PC-9 (cell line): ENCODE measurements at regions of chr3 and their contacts with region 1.

Region 1: DNA sequence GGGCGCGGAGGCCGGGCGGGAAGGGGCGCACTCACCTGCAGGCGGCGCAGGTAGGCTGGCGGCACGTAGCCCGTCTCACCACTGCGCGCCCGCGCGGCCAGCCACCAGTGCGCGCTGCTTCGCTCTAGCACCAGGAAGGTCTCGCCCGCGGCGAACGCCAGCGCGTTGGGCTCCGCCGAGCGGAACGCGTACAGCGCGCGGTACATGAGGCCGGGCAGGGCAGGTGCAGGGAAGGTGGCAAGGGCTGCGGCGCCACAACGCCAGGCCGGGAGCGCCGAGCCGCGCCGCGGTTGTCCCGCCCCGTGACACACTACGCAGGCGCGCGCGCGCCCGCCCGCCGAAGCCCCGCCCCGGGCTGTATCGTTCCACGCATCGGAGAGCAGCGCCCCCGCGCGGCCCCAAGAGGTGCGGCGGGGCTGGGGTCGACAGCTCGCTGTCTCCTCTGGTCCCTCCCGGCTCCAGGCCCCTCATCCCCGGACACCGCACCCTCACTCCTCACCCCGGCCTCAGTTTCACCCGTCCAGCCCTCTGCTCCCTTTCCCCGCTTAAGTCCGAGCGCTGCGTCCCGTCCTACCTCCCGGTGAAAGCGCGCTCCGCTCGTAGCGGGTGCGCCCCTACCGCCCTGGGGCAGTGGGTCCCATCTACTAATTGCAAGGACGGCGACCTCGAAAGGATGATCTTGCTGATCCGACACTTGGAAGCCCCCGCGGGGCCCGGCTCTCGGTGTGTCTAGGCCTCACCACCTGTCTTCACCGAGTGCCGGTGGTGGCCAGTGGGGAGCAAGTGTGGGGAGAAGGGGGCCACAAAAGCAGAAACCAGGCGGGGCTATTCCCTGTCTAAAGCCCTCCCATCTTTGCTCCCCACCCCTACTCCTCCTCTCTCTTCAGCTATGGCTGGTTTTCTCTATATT is at the start of gene NCKIPSD:
- DNase-seq: peak; percentile 52 to 86
- H3K4me3 ChIP-seq: peak within 1 kb of the TSS; percentile 72
- H3K27ac ChIP-seq: peak within 1 kb of the TSS; percentile 46; the same call in 1 of the 2 replicates
- H3K4me1 ChIP-seq: peaks cover 9% of the 10 kb centered on the region
- H3K27me3 ChIP-seq: no peaks in the 10 kb centered on the region
- CTCF ChIP-seq: peak; percentile 72
- total RNA-seq, gene NCKIPSD: 40.0 and 53.3 TPM in 2 replicates

Region 2: GRCh38 chr3:48765376-48765775 is 79.5 kb after region 1 on chr3:
- CTCF ChIA-PET with region 1: no interaction called
- POLR2A ChIA-PET with region 1: interaction called, 13 read pairs
- intact Hi-C with region 1: no loop called
- DNase-seq: no peak
- H3K4me3 ChIP-seq: no peak overlapping the region
- H3K27ac ChIP-seq: no peak overlapping the region
- H3K4me1 ChIP-seq: no peaks in the 10 kb centered on the region
- H3K27me3 ChIP-seq: no peaks in the 10 kb centered on the region
- CTCF ChIP-seq: peak; percentile 53

Region 3: GRCh38 chr3:48997714-48998641 is 312.1 kb after region 1 on chr3:
- CTCF ChIA-PET with region 1: no interaction called
- POLR2A ChIA-PET with region 1: no interaction called
- intact Hi-C with region 1: no loop called
- DNase-seq: no peak
- H3K4me3 ChIP-seq: no peak overlapping the region
- H3K27ac ChIP-seq: no peak overlapping the region
- H3K4me1 ChIP-seq: no peaks in the 10 kb centered on the region
- H3K27me3 ChIP-seq: no peaks in the 10 kb centered on the region
- CTCF ChIP-seq: no peak

Region 4: GRCh38 chr3:49032646-49033304 is 346.9 kb after region 1 on chr3:
- CTCF ChIA-PET with region 1: no interaction called
- POLR2A ChIA-PET with region 1: no interaction called
- intact Hi-C with region 1: no loop called
- DNase-seq: no peak
- H3K4me3 ChIP-seq: no peak overlapping the region
- H3K27ac ChIP-seq: no peak overlapping the region
- H3K4me1 ChIP-seq: peaks cover 7% of the 10 kb centered on the region
- H3K27me3 ChIP-seq: no peaks in the 10 kb centered on the region
- CTCF ChIP-seq: no peak